ENCODE measurements at regions of chr1 and their contacts with region 1.

Region 1: GRCh38 chr1:23539698-23540266 is 8.7 kb upstream of the E2F2 start:
- DNase-seq: peak; percentile 90 to 94
- ATAC-seq: peak; percentile 93
- H3K4me3 ChIP-seq: no peak overlapping the region
- H3K27ac ChIP-seq: peak overlapping the region in 1 of 2 donors; percentile 17
- H3K4me1 ChIP-seq: no peaks in the 10 kb centered on the region
- H3K27me3 ChIP-seq: no peaks in the 10 kb centered on the region

Region 2: GRCh38 chr1:23496490-23497181 is 43.1 kb before region 1 on chr1:
- intact Hi-C with region 1: loop called (anchors 2 to 5 kb)
- DNase-seq: no peak
- ATAC-seq: no peak
- H3K4me3 ChIP-seq: no peak overlapping the region
- H3K27ac ChIP-seq: no peak overlapping the region
- H3K4me1 ChIP-seq: no peaks in the 10 kb centered on the region
- H3K27me3 ChIP-seq: no peaks in the 10 kb centered on the region

Region 3: DNA sequence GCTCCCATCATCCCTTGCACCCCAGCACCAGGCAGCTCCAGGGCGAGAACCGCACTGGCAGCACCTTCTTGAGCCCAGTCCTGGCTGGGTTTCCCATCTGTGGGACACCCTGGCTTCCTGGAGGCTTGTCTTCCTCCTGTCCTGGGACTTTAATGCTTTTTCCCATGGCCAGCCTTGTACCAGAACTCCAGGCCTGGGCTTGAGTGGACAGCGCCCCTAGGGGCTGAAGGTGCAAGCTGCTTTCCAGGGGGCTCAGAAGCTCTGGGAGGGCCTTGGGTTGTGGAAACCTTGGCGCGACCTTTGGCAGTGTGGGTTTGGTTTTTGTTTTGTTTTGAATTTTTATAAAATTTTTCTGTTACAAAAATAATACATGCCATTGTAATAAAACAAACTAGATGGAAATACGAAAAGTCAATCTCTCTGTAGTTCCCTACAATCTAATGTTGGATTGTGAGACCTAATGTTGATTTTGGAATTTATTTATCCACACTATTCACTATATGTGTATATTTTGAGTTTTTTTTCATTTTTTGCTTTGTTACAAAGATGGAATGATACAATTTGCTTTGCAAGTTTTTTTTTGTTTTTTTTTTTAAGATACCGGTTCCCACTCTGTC is 118.0 kb after region 1 on chr1:
- intact Hi-C with region 1: no loop called
- DNase-seq: peak; percentile 69 to 84
- ATAC-seq: peak; percentile 60
- H3K4me3 ChIP-seq: no peak overlapping the region
- H3K27ac ChIP-seq: no peak overlapping the region
- H3K4me1 ChIP-seq: no peaks in the 10 kb centered on the region
- H3K27me3 ChIP-seq: no peaks in the 10 kb centered on the region

Measured in aorta (tissue), 5 donors.